Activated T-helper 2 cell treated with anti-CD3 and anti-CD28 coated beads, Interferon-gamma antibody, Interleukin-2, Interleukin-4, amounts not matched to agents 10 μg/mL and 5 μg/mL and 100 μg/mL, durations not matched to agents 14 hours and 24 hours and 36 hours (primary cell): ENCODE measurements at regions of chr14 and their contacts with region 1.

Region 1: DNA sequence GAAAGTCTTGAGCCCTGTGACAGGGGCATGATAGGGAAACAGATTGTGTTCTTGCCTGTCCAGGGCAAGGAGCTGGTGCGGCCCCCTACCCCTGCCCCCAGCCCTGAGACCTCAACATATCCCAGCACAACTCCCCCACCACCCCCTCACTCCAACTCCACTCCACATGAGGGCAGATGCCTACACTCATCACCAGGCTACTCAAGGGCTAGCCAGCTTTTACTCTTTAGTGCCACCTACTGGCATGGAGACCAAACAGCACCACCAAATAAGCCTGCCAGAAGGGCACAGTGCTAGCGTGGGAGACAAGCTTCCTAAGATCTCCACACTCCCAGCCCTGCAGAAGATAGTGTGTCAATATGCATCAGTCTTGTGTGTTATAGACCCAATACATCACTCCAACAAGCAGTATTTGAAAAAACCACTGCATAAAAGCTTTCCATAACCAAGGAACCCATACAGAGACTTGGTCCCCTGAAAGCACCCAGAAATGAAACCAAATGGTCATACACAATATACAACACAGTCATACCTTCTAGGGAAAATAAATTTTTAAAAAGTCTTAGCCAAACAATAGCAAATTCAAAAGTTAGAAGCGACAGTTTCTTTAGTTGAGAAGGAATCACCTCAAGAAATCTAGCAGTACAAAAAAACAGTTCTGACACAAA is 154.4 kb downstream of the KCNK10 start:
- DNase-seq: peak; percentile 37
- H3K4me3 Mint-ChIP-seq: no peak overlapping the region
- H3K27ac Mint-ChIP-seq: no peak overlapping the region
- H3K4me1 Mint-ChIP-seq: peaks cover 30% of the 10 kb centered on the region
- H3K27me3 Mint-ChIP-seq: peaks cover 34% of the 10 kb centered on the region

Region 2: GRCh38 chr14:87944987-87945604 is 223.5 kb before region 1 on chr14:
- intact Hi-C with region 1: loop called (anchors 1 kb)
- DNase-seq: no peak
- H3K4me3 Mint-ChIP-seq: no peak overlapping the region
- H3K27ac Mint-ChIP-seq: no peak overlapping the region
- H3K4me1 Mint-ChIP-seq: peaks cover 4% of the 10 kb centered on the region
- H3K27me3 Mint-ChIP-seq: no peaks in the 10 kb centered on the region

Region 3: GRCh38 chr14:88013750-88014349 is 154.8 kb before region 1 on chr14:
- intact Hi-C with region 1: loop called (anchors 1 kb)
- DNase-seq: no peak
- H3K4me3 Mint-ChIP-seq: no peak overlapping the region
- H3K27ac Mint-ChIP-seq: no peak overlapping the region
- H3K4me1 Mint-ChIP-seq: peaks cover 59% of the 10 kb centered on the region
- H3K27me3 Mint-ChIP-seq: no peaks in the 10 kb centered on the region